Naive thymus-derived CD4-positive, alpha-beta T cell (primary cell): ENCODE measurements at regions of chr14 and their contacts with region 1.

Region 1: GRCh38 chr14:96100161-96101029 is 61.2 kb downstream of the C14orf132 start:
- DNase-seq: peak; percentile 39 to 80 (median 73)
- ATAC-seq: peak; percentile 86
- H3K4me3 ChIP-seq: no peak overlapping the region
- H3K4me3 Mint-ChIP-seq: no peak overlapping the region
- H3K27ac ChIP-seq: no peak overlapping the region
- H3K27ac Mint-ChIP-seq: peak overlapping the region in 5 of 9 donors; percentile 11 to 88 (median 18)
- H3K4me1 ChIP-seq: no peaks in the 10 kb centered on the region
- H3K4me1 Mint-ChIP-seq: peaks cover 0 to 10% (median 5%) of the 10 kb centered on the region in 7 donors
- H3K27me3 ChIP-seq: no peaks in the 10 kb centered on the region
- H3K27me3 Mint-ChIP-seq: peaks cover 0 to 12% (median 0%) of the 10 kb centered on the region in 5 donors

Region 2: DNA sequence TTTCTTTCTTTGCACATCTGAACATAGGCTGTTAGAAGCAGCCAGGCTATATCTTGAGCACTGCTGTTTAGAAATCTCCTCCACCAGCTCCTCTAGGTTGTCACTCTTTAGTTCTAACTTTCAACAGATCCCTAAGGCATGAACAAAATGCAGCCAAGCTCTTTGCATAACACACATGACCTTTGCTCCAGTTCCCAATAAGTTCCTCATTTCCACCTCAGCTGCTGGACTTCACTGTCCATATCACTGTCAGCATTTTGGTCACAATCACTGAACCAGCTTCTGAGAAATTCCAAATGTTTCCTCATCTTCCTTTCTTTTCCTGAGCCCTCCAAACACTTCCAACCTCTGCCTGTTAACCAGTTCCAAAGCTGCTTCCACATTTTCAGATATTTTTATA is 88.8 kb before region 1 on chr14:
- CTCF ChIA-PET with region 1: interaction called, 6 read pairs
- POLR2A ChIA-PET with region 1: interaction called, 3 read pairs
- intact Hi-C with region 1: loop called in 1 of 2 experiments (anchors 1 kb)
- DNase-seq: no peak
- ATAC-seq: no peak
- H3K4me3 ChIP-seq: no peak overlapping the region
- H3K4me3 Mint-ChIP-seq: no peak overlapping the region
- H3K27ac ChIP-seq: no peak overlapping the region
- H3K27ac Mint-ChIP-seq: peak overlapping the region in 1 of 9 donors; percentile 74
- H3K4me1 ChIP-seq: no peaks in the 10 kb centered on the region
- H3K4me1 Mint-ChIP-seq: peaks cover 0 to 1% (median 0%) of the 10 kb centered on the region in 7 donors
- H3K27me3 ChIP-seq: no peaks in the 10 kb centered on the region
- H3K27me3 Mint-ChIP-seq: peaks cover 0 to 14% (median 6%) of the 10 kb centered on the region in 5 donors

Region 3: GRCh38 chr14:96053600-96054381 is 46.6 kb before region 1 on chr14:
- CTCF ChIA-PET with region 1: no interaction called
- POLR2A ChIA-PET with region 1: no interaction called
- intact Hi-C with region 1: no loop called
- DNase-seq: no peak
- ATAC-seq: no peak
- H3K4me3 ChIP-seq: no peak overlapping the region
- H3K4me3 Mint-ChIP-seq: no peak overlapping the region
- H3K27ac ChIP-seq: no peak overlapping the region
- H3K27ac Mint-ChIP-seq: no peak overlapping the region
- H3K4me1 ChIP-seq: no peaks in the 10 kb centered on the region
- H3K4me1 Mint-ChIP-seq: peaks cover 0 to 7% (median 0%) of the 10 kb centered on the region in 7 donors
- H3K27me3 ChIP-seq: no peaks in the 10 kb centered on the region
- H3K27me3 Mint-ChIP-seq: peaks cover 0 to 12% (median 6%) of the 10 kb centered on the region in 5 donors

Region 4: GRCh38 chr14:96117100-96117897 is 16.9 kb after region 1 on chr14:
- CTCF ChIA-PET with region 1: interaction called, 9 read pairs
- POLR2A ChIA-PET with region 1: no interaction called
- intact Hi-C with region 1: loop called in 1 of 2 experiments (anchors 1 kb)
- DNase-seq: peak in 7 of 9 donors; percentile 8 to 61 (median 46)
- ATAC-seq: peak; percentile 60
- H3K4me3 ChIP-seq: no peak overlapping the region
- H3K4me3 Mint-ChIP-seq: peak overlapping the region in 8 of 10 donors; percentile 15 to 72 (median 52)
- H3K27ac ChIP-seq: peak overlapping the region; percentile 71
- H3K27ac Mint-ChIP-seq: peak overlapping the region in 8 of 9 donors; percentile 84 to 94 (median 91)
- H3K4me1 ChIP-seq: peaks cover 0 to 20% of the 10 kb centered on the region in 2 donors
- H3K4me1 Mint-ChIP-seq: peaks cover 12 to 48% (median 39%) of the 10 kb centered on the region in 7 donors
- H3K27me3 ChIP-seq: no peaks in the 10 kb centered on the region
- H3K27me3 Mint-ChIP-seq: no peaks in the 10 kb centered on the region

Region 5: DNA sequence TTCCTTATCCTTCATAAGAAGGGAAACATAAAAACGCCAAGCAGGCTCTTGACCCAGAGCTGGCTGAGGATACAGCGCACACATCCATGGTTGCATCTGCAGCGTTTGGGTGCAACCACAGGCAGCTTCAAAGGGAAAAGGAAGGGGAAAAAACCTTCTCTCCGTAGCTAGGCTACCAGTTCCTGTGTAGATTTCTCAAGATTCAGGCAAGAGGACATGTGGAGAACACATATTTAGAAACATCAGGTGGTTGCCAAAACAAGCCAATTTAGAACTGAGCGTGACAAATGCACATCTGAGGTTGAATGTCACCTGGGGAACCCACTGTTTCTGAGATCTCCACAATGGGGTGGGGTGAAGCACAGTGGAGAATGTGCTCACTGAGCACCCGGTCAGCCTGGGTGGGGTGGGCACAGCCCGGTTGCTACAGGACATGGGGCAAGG is 26.0 kb after region 1 on chr14:
- CTCF ChIA-PET with region 1: interaction called, 30 read pairs
- POLR2A ChIA-PET with region 1: no interaction called
- intact Hi-C with region 1: loop called in 1 of 2 experiments (anchors 1 kb)
- DNase-seq: peak in 8 of 9 donors; percentile 33 to 92 (median 82)
- ATAC-seq: peak; percentile 93
- H3K4me3 ChIP-seq: peak overlapping the region; percentile 5
- H3K4me3 Mint-ChIP-seq: peak overlapping the region; percentile 60 to 92 (median 80)
- H3K27ac ChIP-seq: peak overlapping the region; percentile 80
- H3K27ac Mint-ChIP-seq: peak overlapping the region; percentile 96 to 100 (median 99)
- H3K4me1 ChIP-seq: peaks cover 15 to 32% of the 10 kb centered on the region in 2 donors
- H3K4me1 Mint-ChIP-seq: peaks cover 11 to 58% (median 49%) of the 10 kb centered on the region in 7 donors
- H3K27me3 ChIP-seq: no peaks in the 10 kb centered on the region
- H3K27me3 Mint-ChIP-seq: no peaks in the 10 kb centered on the region

Region 6: DNA sequence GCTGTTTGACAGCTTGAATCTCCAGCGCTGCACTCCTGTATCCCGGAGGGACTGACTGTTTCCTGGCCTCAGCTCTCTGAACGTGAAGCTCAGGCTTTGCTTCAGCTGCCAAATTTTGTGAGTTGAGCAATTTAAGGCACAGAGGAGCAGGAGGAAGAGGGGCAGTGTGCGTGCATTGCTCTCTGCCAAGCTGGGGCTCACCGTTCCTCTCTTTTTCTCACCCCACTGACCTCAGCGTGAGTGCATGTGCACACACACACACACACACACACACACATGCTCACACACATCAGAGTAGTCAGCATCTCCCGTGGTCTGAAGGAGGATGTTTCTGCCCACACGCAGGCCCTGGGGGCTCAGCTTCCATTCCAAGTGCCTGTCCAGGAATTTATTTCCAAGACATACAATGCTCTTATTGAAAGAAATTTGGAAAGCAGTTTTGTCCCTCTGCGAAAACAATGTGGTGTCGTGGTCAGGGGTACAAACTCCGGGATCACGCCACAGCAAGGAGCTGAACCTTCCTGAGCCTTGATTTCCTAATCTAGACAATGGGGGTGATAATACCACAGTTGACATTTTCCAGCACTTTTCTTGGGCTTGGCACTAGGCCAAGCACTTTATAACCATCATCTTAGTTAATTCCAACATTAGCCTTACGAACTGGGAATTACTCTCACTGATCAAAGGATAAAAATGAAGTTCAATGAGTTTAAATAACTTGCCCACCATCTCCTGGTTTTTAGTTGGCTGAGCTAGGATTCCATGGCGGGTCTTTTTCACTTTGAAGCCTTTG is 76.6 kb after region 1 on chr14:
- CTCF ChIA-PET with region 1: no interaction called
- POLR2A ChIA-PET with region 1: no interaction called
- intact Hi-C with region 1: loop called in 1 of 2 experiments (anchors 2 kb)
- DNase-seq: no peak
- ATAC-seq: no peak
- H3K4me3 ChIP-seq: no peak overlapping the region
- H3K4me3 Mint-ChIP-seq: no peak overlapping the region
- H3K27ac ChIP-seq: no peak overlapping the region
- H3K27ac Mint-ChIP-seq: peak overlapping the region in 1 of 9 donors; percentile 29
- H3K4me1 ChIP-seq: peaks cover 0 to 3% of the 10 kb centered on the region in 2 donors
- H3K4me1 Mint-ChIP-seq: peaks cover 3 to 29% (median 17%) of the 10 kb centered on the region in 7 donors
- H3K27me3 ChIP-seq: no peaks in the 10 kb centered on the region
- H3K27me3 Mint-ChIP-seq: peaks cover 0 to 14% (median 8%) of the 10 kb centered on the region in 5 donors

Region 7: DNA sequence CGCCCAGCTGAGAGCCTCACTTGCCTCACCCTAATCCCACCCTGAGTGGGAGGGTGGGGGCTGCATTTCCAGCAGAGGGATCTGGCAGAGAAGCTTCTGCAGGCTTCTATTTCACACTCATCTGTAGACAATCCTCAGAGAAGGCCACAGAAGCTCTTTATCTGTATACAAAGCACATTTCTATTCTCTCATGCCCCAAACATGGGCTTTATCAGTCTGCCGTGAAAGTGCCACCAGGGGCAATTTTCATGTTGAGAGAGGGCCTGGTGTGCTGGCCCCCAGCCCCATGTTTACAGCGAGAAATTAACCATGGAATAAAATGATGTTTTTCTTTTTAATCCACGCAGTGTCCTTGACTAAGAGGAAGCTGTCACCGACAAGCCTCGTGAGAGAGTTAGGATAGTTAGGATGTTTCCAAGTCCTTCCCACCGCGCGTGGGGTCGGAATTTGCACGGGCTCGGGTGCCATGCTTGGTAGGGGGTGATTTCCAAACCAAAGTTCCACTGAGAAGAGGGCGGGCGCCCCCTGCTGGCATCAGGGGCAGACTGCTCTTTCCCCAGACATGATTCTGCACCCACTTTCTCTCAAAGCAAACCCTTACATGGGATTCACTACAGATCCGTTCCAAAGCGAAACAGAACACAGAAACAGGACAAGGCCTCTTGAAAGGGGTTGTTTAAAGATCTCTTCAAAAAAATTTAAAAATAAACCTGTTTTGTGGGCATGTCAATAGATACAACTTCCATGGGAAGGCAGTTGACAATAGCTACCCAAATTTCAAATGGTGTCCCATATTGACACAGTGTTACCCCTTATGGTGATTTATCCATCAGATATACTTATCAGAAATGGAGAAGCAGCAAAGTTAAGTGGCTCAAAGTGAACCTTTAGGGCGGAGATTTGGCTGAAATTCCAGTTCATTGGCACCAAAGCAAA is 175.1 kb after region 1 on chr14:
- CTCF ChIA-PET with region 1: interaction called, 87 read pairs
- POLR2A ChIA-PET with region 1: interaction called, 3 read pairs
- intact Hi-C with region 1: loop called (anchors 1 kb)
- DNase-seq: peak; percentile 41 to 73 (median 67)
- ATAC-seq: peak; percentile 66
- H3K4me3 ChIP-seq: no peak overlapping the region
- H3K4me3 Mint-ChIP-seq: no peak overlapping the region
- H3K27ac ChIP-seq: no peak overlapping the region
- H3K27ac Mint-ChIP-seq: peak overlapping the region in 1 of 9 donors; percentile 9
- H3K4me1 ChIP-seq: peaks cover 0 to 2% of the 10 kb centered on the region in 2 donors
- H3K4me1 Mint-ChIP-seq: peaks cover 0 to 5% (median 0%) of the 10 kb centered on the region in 7 donors
- H3K27me3 ChIP-seq: no peaks in the 10 kb centered on the region
- H3K27me3 Mint-ChIP-seq: no peaks in the 10 kb centered on the region

Region 8: DNA sequence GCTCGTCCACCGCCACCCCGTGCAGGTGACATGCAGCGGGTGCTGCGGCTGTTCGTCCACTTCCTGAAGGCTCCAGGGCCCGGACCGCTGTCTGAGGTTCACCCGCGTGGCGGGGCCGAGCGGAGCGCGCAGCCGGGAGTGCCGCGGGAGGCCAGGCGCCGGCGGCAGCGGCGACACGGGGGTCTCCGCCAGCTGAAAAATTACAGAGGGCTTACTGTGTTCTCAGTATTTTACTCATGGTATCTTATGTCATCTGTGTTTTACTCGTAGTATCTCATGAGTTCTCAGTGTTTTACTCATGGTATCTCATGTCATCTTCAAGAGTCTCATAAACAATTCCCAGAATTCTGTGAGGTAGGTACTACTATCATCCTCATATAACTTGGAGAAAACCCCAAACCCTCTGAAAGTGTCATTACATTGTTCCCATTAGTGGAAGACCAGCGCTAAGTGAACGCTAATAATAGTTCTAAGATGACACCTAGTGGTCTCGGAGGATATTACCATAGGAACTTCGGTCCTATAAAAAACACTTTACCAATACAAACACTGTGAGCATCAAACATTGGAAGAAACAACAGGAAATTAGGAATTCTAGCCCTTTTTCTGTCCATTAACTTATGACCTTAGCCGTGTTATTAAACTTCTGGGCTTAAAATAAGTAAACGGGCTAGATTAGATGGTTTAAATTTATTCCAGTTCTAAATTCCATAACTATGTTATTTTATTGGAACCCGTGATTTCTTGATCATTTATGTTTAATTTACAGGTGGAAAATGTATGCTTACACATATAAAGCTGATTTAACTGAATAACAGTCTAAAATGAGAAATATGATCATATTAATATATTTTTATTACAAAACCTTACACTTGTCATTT is 324.0 kb after region 1 on chr14:
- CTCF ChIA-PET with region 1: interaction called, 4 read pairs
- POLR2A ChIA-PET with region 1: no interaction called
- intact Hi-C with region 1: loop called in 1 of 2 experiments (anchors 1 kb)
- DNase-seq: peak in 8 of 9 donors; percentile 17 to 58 (median 50)
- ATAC-seq: peak; percentile 88
- H3K4me3 ChIP-seq: peak overlapping the region; percentile 49
- H3K4me3 Mint-ChIP-seq: peak overlapping the region; percentile 60 to 84 (median 82)
- H3K27ac ChIP-seq: no peak overlapping the region
- H3K27ac Mint-ChIP-seq: peak overlapping the region in 1 of 9 donors; percentile 41
- H3K4me1 ChIP-seq: no peaks in the 10 kb centered on the region
- H3K4me1 Mint-ChIP-seq: peaks cover 0 to 5% (median 3%) of the 10 kb centered on the region in 7 donors
- H3K27me3 ChIP-seq: no peaks in the 10 kb centered on the region
- H3K27me3 Mint-ChIP-seq: peaks cover 0 to 10% (median 3%) of the 10 kb centered on the region in 5 donors